Thyroid gland (tissue), 4 donors: ENCODE measurements at regions of chr19 and their contacts with region 1.

Region 1: GRCh38 chr19:18596752-18597157 is 8.2 kb downstream of the REX1BD start:
- DNase-seq: no peak
- H3K4me3 ChIP-seq: no peak overlapping the region
- H3K27ac ChIP-seq: no peak overlapping the region
- H3K4me1 ChIP-seq: peaks cover 10 to 20% of the 10 kb centered on the region in 2 donors
- H3K27me3 ChIP-seq: no peaks in the 10 kb centered on the region
- CTCF ChIP-seq: no peak
- POLR2A ChIP-seq: no peak

Region 2: DNA sequence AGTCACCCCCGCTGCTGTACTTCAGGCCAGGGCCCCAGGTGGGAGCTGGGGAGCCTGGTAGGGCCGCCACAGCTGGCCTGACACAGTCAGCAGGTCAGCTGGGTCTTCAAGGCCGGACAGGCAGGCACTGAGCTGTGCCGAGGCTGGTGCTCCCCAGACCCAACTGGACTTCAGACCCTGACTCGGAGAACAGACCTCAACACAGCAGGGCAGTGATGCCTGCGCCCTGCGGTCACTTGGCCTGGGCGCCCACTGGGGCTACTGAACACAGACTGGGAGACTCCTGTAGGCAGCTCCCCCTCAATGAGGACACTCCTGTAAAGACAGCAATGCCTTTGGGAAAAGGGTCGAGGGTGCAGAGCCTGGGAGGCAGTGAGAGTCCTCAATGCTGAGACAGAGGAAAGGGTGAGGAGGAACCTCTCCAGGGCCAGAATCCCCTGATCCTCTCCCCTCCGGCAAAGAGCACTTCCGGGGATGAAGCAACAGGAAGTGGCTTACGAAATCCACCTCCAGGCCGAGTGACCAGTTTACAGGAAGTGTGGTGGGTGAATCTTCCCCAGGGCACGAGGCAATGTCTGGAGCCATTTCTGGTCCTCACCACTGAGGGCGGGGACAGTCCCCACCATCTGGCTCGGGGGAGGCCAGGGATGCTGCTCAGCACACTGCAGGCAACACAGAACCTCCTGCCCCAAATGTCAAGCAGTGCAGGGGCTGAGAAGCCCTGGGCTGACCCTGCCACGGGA is 118.0 kb before region 1 on chr19:
- intact Hi-C with region 1: no loop called
- DNase-seq: peak; percentile 30 to 50
- H3K4me3 ChIP-seq: no peak overlapping the region
- H3K27ac ChIP-seq: peak overlapping the region; percentile 27 to 75 (median 75)
- H3K4me1 ChIP-seq: peaks cover 25 to 49% of the 10 kb centered on the region in 2 donors
- H3K27me3 ChIP-seq: no peaks in the 10 kb centered on the region
- CTCF ChIP-seq: no peak
- POLR2A ChIP-seq: no peak

Region 3: GRCh38 chr19:18514800-18515651 is 81.7 kb before region 1 on chr19:
- intact Hi-C with region 1: no loop called
- DNase-seq: peak; percentile 52 to 54
- H3K4me3 ChIP-seq: no peak overlapping the region
- H3K27ac ChIP-seq: peak overlapping the region in 2 of 3 donors; percentile 57 to 63
- H3K4me1 ChIP-seq: peaks cover 23 to 54% of the 10 kb centered on the region in 2 donors
- H3K27me3 ChIP-seq: no peaks in the 10 kb centered on the region
- CTCF ChIP-seq: no peak
- POLR2A ChIP-seq: no peak

Region 4: DNA sequence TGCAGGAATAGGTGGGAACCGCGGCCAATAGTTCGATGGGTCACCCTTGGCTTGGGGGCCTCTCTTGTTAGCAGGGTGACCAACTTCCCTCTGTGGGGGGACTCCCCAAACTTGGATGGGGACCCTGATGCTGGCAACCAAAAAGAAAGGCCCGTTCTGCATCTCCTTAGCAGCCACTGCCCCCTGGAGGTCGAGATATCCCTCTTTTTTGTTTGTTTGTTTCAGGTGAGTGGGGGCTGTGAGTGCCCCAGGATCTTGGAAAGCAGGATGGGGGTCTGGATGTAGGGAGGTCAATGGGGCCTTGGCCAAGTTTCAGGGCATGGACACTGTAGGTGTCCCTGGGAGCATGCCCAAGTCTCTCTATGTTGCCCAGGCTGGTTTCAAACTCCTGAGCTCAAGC is 79.0 kb after region 1 on chr19:
- intact Hi-C with region 1: loop called (anchors 5 kb)
- DNase-seq: no peak
- H3K4me3 ChIP-seq: no peak overlapping the region
- H3K27ac ChIP-seq: no peak overlapping the region
- H3K4me1 ChIP-seq: peaks cover 15 to 39% of the 10 kb centered on the region in 2 donors
- H3K27me3 ChIP-seq: no peaks in the 10 kb centered on the region
- CTCF ChIP-seq: peak in 3 of 6 experiments; percentile 9 to 29 (median 10)
- POLR2A ChIP-seq: no peak

Region 5: GRCh38 chr19:18814063-18814462 is 217.3 kb after region 1 on chr19:
- intact Hi-C with region 1: no loop called
- DNase-seq: no peak
- H3K4me3 ChIP-seq: no peak overlapping the region
- H3K27ac ChIP-seq: no peak overlapping the region
- H3K4me1 ChIP-seq: no peaks in the 10 kb centered on the region
- H3K27me3 ChIP-seq: no peaks in the 10 kb centered on the region
- CTCF ChIP-seq: no peak
- POLR2A ChIP-seq: no peak